MCF 10A (cell line): ENCODE measurements at regions of chr22 and their contacts with region 1.

Region 1: DNA sequence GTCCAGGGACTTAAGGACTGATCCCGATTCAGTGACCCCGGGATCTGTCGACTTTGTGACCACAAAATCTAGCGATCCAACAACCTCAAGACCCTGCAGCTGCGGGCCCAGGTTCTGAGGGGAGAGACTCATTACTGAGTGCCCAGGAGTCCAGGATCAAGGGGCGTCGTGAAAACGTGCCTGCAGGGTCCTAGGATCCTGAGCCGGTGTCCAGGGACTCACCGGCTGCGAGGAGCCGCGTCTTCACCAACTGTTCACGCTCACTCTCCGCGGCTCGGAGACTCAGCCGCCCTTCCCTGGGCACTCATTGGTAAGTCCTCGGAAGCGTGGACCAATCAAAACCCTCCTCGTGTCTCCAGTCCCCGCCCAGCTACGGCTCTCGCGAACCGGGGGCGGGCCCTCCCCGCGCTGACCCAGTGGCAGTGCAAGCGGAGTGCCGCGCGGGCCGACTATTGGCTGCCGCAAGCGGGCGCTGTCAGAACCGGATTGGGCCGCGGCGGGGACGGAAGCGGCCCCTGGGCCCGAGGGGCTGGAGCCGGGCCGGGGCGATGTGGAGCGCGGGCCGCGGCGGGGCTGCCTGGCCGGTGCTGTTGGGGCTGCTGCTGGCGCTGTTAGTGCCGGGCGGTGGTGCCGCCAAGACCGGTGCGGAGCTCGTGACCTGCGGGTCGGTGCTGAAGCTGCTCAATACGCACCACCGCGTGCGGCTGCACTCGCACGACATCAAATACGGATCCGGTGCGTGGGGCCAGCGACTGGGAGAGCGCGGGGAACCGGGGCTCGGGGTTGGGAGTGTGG is at the start of gene SDF2L1:
- DNase-seq: peak; percentile 98
- H3K4me3 Mint-ChIP-seq: peak within 1 kb of the TSS; percentile 76
- H3K27ac Mint-ChIP-seq: peak within 1 kb of the TSS; percentile 83
- H3K4me1 Mint-ChIP-seq: peaks cover 13% of the 10 kb centered on the region
- H3K27me3 Mint-ChIP-seq: no peaks in the 10 kb centered on the region
- CTCF ChIP-seq: no peak
- total RNA-seq, gene SDF2L1: 91.5 and 123 TPM in 2 replicates

Region 2: DNA sequence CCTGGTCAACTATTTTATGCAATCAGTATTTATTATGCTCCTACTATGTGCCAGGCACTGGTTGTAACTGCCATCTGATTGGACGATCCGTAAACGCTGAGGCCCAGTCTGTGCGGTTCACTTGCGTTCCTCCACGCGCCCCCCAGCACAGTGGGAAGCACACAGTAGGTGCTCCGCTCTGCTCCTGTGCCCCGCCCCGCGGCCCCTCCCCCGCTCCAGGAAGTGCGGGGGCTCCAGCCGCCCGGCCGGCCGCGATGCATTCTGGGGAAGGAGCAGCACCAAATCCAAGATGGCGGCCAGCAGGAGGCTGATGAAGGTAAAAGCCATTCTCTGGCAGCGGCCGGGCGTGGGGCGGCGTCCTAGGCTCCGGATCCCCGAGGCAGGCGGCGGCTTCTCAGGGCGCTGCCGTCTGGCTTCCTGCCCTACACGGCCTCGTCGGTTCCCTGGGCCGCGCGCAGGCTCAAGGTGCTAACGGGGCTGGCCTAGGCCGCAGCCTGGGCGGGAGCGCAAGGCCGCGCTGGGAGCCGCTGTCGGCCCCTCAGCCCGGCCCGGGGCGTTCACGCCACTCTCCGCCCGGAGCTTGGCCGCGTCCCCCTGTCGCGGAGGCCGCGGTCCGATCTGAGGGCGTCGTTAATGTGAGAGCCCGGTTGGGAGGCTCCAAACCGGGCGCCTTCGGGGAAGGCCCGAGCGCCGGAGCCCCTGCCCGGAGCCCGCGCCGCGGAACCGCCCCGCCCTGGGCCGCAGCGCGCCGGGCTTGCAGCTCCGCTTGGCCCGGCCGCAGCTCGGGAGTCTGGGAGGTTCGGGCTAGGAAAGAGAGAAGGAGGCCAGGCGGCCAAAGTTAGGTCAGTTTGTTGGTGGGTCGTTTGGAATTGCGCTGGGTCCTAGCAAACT is 74.3 kb before region 1 on chr22 and contains the start of gene UBE2L3:
- CTCF ChIA-PET with region 1: interaction called, 5 read pairs
- POLR2A ChIA-PET with region 1: interaction called, 12 read pairs
- intact Hi-C with region 1: no loop called
- DNase-seq: peak; percentile 80
- H3K4me3 Mint-ChIP-seq: peak within 1 kb of the TSS; percentile 83
- H3K27ac Mint-ChIP-seq: peak within 1 kb of the TSS; percentile 90
- H3K4me1 Mint-ChIP-seq: peaks cover 23% of the 10 kb centered on the region
- H3K27me3 Mint-ChIP-seq: no peaks in the 10 kb centered on the region
- CTCF ChIP-seq: no peak
- total RNA-seq, gene UBE2L3: 44.2 and 49.0 TPM in 2 replicates

Region 3: GRCh38 chr22:21606775-21607174 is 35.2 kb before region 1 on chr22:
- CTCF ChIA-PET with region 1: interaction called, 10 read pairs
- POLR2A ChIA-PET with region 1: interaction called, 4 read pairs
- intact Hi-C with region 1: no loop called
- DNase-seq: peak; percentile 61
- H3K4me3 Mint-ChIP-seq: no peak overlapping the region
- H3K27ac Mint-ChIP-seq: peak overlapping the region; percentile 28
- H3K4me1 Mint-ChIP-seq: peaks cover 5% of the 10 kb centered on the region
- H3K27me3 Mint-ChIP-seq: no peaks in the 10 kb centered on the region
- CTCF ChIP-seq: no peak

Region 4: GRCh38 chr22:21624120-21624879 is 17.7 kb before region 1 on chr22:
- CTCF ChIA-PET with region 1: interaction called, 69 read pairs
- POLR2A ChIA-PET with region 1: interaction called, 80 read pairs
- intact Hi-C with region 1: loop called (anchors 1 kb)
- DNase-seq: peak; percentile 46
- H3K4me3 Mint-ChIP-seq: no peak overlapping the region
- H3K27ac Mint-ChIP-seq: no peak overlapping the region
- H3K4me1 Mint-ChIP-seq: peaks cover 34% of the 10 kb centered on the region
- H3K27me3 Mint-ChIP-seq: no peaks in the 10 kb centered on the region
- CTCF ChIP-seq: peak; percentile 59

Region 5: DNA sequence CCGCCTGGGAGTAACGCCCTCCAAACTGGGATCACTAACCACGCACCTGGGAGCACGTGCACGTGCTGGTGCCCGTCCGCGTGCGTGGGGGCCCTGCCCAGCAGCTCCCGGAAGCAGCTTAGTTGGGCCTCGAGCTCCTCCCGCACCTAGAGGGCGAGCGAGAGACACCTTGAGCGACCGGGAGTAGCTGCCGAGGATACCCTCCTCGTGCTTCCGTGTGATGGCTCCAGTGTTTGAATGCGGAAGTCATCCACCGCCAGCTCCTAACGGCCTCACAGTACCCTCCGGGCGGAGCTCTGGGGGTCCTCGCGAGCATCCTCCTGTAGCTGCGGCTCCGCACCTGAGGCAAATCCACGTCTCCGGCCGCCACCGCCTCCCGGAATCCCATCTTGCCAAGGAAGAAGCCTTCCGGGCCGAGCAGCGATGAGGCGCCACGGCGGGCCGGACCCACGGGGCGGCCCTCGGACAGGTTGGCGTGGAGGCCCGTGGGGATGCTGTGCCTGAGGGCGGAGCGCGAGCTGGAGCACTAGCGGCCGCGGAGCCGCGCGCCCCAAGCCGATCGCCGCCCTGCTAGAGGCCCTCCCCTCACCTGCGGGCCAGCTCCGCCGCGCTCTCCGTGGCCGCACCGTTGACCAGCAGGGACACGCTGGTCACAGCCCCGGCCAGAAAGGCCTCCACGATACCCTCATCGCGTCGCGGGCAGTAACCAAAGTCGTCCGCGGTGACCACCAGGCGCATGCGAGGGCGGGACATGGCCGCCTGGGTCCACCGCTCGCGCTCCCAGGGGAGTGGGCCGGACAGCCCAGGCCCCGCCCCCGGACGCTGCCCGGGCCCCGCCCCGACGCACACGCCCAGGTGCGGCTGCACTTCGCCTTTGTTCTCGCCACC is 12.5 kb before region 1 on chr22 and contains the start of gene YDJC:
- CTCF ChIA-PET with region 1: interaction called, 69 read pairs
- POLR2A ChIA-PET with region 1: interaction called, 80 read pairs
- intact Hi-C with region 1: loop called (anchors 1 kb)
- DNase-seq: peak; percentile 94
- H3K4me3 Mint-ChIP-seq: peak within 1 kb of the TSS; percentile 86
- H3K27ac Mint-ChIP-seq: peak within 1 kb of the TSS; percentile 83
- H3K4me1 Mint-ChIP-seq: peaks cover 15% of the 10 kb centered on the region
- H3K27me3 Mint-ChIP-seq: no peaks in the 10 kb centered on the region
- CTCF ChIP-seq: peak; percentile 80
- total RNA-seq, gene YDJC: 58.6 and 83.5 TPM in 2 replicates

Region 6: DNA sequence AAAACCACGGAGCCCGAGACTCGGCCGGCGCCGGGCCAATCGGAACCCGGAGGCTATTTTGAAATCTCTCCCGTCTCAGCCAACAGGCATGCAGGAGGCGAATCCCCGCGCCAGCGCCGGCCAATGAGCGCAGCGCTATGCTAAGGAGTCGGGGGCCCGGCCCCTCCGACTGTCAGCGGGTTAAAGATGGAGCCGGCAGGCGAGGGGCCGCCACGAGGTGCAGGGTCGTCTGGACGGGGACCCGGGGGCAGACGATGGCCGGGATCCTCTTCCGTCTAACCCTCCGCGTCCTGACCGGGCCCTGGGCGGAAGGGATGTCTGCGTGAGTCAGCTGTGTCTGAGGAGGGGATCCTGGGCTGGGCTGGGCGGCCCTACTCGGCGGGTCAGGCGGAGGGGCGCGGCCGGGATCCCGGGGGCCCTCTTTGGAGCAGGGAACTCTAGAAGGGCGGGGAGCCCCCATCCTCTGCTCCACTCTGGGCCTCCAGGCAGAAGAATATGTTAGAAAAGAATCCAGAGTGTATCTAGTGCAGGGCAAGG is 10.1 kb after region 1 on chr22:
- CTCF ChIA-PET with region 1: interaction called, 7 read pairs
- POLR2A ChIA-PET with region 1: interaction called, 23 read pairs
- intact Hi-C with region 1: no loop called
- DNase-seq: peak; percentile 87
- H3K4me3 Mint-ChIP-seq: peak overlapping the region; percentile 85
- H3K27ac Mint-ChIP-seq: no peak overlapping the region
- H3K4me1 Mint-ChIP-seq: peaks cover 5% of the 10 kb centered on the region
- H3K27me3 Mint-ChIP-seq: no peaks in the 10 kb centered on the region
- CTCF ChIP-seq: no peak

Region 7: DNA sequence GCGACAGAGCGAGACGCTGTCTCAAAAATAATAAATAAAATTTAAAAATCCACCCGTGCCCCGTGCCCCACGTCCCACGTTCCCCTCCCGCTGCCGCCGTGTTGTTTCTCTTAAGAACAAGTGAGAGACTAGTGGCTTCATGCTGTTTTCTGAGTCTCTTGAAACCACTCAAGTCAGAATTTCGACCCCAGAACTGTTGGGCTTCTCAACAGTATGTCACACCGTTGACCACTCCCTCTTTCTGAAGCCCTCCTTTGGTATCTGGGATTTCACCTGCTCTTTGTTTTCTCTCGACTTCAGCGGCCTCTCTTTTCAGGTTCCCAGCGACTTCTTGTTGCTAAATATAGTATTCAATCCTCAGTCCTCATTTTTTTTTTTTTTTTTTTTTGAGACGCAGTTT is 24.8 kb after region 1 on chr22:
- CTCF ChIA-PET with region 1: interaction called, 7 read pairs
- POLR2A ChIA-PET with region 1: interaction called, 19 read pairs
- intact Hi-C with region 1: no loop called
- DNase-seq: no peak
- H3K4me3 Mint-ChIP-seq: peak overlapping the region; percentile 99
- H3K27ac Mint-ChIP-seq: peak overlapping the region; percentile 91
- H3K4me1 Mint-ChIP-seq: peaks cover 6% of the 10 kb centered on the region
- H3K27me3 Mint-ChIP-seq: no peaks in the 10 kb centered on the region
- CTCF ChIP-seq: no peak

Region 8: GRCh38 chr22:21754523-21754922 is 112.5 kb after region 1 on chr22:
- CTCF ChIA-PET with region 1: no interaction called
- POLR2A ChIA-PET with region 1: no interaction called
- intact Hi-C with region 1: no loop called
- DNase-seq: no peak
- H3K4me3 Mint-ChIP-seq: no peak overlapping the region
- H3K27ac Mint-ChIP-seq: no peak overlapping the region
- H3K4me1 Mint-ChIP-seq: no peaks in the 10 kb centered on the region
- H3K27me3 Mint-ChIP-seq: no peaks in the 10 kb centered on the region
- CTCF ChIP-seq: no peak